Left colon (tissue), 2 donors: ENCODE measurements at regions of chr3 and their contacts with region 1.

Region 1: GRCh38 chr3:117074826-117075225 is 365.2 kb downstream of the TUSC7 start:
- DNase-seq: no peak
- ATAC-seq: no peak

Region 2: DNA sequence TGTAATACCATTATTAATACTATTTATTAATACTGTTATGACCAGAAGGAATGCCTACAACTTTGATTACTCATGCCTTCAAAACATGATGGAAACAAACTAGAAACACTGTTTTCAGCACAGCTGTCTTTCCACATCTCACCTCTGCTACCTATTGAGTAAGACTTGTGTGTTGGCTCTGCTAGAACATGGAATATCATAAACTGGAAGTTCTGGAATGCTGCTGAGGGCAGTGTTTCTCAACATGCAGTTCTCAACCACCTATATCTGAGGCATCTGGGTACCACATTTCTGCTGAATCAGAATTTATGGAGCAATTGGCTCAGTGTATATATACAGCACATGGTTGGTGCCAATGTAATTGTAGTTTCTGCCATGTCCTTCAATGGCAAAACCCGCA is 26.9 kb after region 1 on chr3:
- intact Hi-C with region 1: loop called in 1 of 2 experiments (anchors 1 kb)
- DNase-seq: no peak
- ATAC-seq: no peak